ENCODE measurements at regions of chr6 and their contacts with region 1.

Region 1: DNA sequence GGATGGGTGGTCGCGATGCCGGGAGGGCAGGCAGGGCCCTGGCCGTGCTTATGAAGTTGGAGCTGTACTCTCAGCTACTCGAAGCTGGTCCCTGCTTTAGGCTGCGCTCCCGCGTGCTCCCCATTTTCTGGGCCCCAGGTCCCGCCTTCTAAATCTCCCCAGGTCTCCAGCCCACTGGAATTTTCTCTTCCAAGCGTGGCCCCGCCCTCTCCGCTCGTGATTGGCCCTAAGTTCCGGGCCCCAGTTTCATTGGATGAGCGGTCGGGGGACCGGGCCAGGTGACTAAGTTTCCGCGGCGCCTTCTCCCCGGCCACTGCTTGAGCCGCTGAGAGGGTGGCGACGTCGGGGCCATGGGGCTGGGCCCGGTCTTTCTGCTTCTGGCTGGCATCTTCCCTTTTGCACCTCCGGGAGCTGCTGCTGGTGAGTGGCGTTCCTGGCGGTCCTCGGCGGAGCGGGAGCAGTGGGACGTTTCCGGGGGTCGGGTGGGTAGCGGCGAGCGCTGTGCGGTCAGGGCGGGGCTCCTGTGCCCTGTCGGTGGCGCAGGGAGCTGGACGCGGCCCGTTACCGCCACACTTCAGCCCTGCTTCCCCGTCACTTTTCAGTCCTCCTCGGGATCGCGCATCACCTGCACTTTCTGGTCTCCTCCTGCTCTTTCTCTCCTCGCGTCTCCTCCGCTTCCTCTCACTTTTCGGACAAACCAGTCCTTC is at the start of gene MICA:
- DNase-seq: peak; percentile 77
- ATAC-seq: peak; percentile 68
- H3K4me3 Mint-ChIP-seq: peak within 1 kb of the TSS; percentile 81
- H3K27ac Mint-ChIP-seq: peak within 1 kb of the TSS; percentile 71
- H3K4me1 Mint-ChIP-seq: peaks cover 57% of the 10 kb centered on the region
- H3K27me3 Mint-ChIP-seq: no peaks in the 10 kb centered on the region
- CTCF ChIP-seq: no peak
- total RNA-seq, gene MICA: 5.6 to 6.0 TPM

Region 2: DNA sequence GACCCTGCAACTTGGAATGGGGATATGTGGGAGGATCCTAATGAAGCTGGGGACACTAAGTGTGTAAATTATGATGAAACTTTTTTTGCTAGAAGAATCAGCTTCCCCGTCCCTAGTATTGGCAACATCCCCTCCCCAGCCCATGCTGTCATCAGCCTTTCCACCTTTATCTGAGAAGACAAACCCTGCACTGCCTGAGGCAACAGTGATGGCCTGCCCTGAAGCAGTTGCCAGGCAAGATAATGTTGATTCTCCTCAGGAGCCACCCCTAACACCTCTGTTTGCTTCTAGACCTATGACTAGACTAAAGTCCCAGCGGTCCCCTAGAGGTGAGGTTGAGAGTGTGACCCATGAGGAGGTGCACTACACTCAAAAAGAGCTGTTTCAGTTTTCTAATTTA is 27.0 kb after region 1 on chr6:
- CTCF ChIA-PET with region 1: interaction called, 11 read pairs
- POLR2A ChIA-PET with region 1: interaction called, 3 read pairs
- intact Hi-C with region 1: no loop called
- DNase-seq: no peak
- ATAC-seq: no peak
- H3K4me3 Mint-ChIP-seq: no peak overlapping the region
- H3K27ac Mint-ChIP-seq: no peak overlapping the region
- H3K4me1 Mint-ChIP-seq: no peaks in the 10 kb centered on the region
- H3K27me3 Mint-ChIP-seq: peaks cover 2% of the 10 kb centered on the region
- CTCF ChIP-seq: no peak

Measured in activated CD8-positive, alpha-beta T cell treated with anti-CD3 and anti-CD28 coated beads for 36 hours (primary cell).